ENCODE measurements at regions of chr1 and their contacts with region 1.

Region 1: DNA sequence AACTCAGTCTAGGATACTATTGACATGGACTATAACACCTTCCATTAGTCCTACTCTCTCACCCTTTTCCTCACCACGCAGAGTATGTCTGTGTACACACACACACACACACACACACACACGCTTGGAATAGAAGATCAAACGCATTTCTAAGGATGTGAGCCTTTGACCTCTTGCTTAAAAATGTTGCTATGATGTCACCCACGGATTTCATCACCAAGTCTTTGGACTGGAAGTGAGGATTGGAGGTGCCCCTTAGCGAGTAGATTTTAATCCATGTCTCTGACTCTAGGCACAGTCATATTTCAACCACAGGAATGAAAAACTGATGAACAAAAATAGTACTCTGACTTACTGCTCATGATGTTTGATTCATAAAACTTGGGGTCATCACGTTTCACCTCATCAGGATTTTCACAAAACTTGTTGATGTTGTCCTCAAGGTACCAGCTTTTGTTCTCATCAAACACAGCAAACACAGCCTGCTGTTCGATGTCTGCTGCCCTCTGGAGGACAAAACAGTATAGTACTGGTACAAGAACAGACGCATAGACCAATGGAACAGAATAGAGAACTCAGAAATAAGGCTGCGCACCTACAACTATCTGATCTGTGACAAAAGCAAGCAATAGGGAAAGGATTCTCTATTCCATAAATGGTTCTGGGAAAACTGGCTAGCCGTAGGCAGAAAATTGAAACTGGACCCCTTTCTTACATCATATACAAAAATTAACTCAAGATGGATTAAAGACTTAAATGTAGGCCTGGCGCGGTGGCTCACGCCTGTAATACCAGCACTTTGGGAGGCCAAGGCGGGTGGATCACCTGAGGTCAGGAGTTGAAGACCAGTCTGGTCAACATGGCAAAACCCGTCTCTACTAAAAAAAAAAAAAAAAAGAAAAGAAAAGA is 39.9 kb downstream of the F5 start:
- DNase-seq: peak; percentile 11
- CTCF ChIP-seq: peak; percentile 78

Region 2: GRCh38 chr1:169466259-169467230 is 79.8 kb before region 1 on chr1:
- in situ Hi-C with region 1: loop called (anchors 10 kb)
- DNase-seq: no peak
- CTCF ChIP-seq: peak; percentile 49

Measured in GM13977 (cell line).